ENCODE measurements at regions of chr11 and their contacts with region 1.

Region 1: DNA sequence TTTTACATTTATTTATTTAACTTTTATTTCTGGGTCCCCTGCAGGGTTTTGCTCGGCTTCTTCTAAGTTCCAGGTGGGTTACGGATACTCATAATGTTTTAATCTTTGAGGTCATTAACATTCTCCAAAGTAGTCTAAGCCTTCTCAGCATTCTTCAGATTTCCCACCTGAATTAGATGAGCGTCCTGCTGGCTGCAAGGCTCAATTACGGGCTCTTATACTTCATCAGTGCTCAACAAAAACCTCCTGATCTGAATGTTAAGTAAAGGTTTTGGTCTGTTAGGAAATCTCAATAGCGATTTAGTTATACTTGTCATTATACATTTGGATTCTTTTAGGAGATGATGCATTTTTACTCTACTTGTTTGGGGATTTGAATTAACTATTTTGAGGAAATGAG is 27.3 kb upstream of the NFRKB start:
- DNase-seq: no peak
- H3K4me3 ChIP-seq: no peak overlapping the region
- H3K27ac ChIP-seq: no peak overlapping the region
- H3K4me1 ChIP-seq: no peaks in the 10 kb centered on the region
- H3K27me3 ChIP-seq: no peaks in the 10 kb centered on the region
- CTCF ChIP-seq: no peak

Region 2: DNA sequence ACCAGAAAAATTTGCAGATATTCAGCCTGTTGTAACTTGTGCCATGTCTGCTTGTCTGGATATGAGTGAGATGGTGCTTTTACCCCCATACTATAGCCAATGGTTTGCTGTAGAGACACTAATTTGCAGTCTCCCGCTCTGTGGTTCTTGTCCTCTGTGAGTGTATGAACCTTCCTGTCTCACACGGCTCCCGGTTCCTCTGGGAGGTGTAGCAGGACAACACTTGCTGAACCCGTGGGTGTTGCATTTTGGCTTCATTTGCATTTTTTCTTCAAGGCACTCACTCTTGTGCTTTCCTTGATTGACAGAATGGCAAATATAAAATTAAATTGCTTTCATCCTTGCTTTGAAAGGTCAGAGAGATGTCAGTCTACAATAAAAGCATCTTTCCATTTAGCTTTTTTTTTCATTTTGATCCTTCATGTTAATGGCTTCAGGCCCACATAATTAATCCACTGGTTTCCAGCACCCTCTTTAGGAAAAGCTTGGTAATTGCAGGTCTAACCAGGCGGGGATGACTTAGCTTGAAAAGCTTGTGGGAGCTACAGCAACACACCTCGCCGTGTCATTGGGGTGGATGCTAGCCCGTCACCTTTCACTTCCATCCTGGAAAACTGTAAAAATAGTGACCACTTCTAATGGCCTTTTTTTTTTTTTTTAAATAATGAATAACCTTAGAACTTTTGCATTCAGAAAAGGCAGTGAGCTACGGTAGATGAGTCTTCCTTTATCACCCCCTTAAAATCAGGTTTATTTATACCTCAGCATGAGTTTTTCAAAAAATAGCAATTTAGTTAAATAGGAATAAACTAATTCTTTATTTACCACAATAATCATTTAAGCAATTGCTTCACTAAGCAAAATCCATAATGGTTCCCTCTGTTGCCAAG is 209.5 kb after region 1 on chr11:
- intact Hi-C with region 1: loop called (anchors 5 kb)
- DNase-seq: no peak
- H3K4me3 ChIP-seq: no peak overlapping the region
- H3K27ac ChIP-seq: no peak overlapping the region
- H3K4me1 ChIP-seq: peaks cover 16% of the 10 kb centered on the region
- H3K27me3 ChIP-seq: no peaks in the 10 kb centered on the region
- CTCF ChIP-seq: peak; percentile 90

Measured in left ventricle myocardium inferior (tissue), 1 donor.